SK-N-SH (cell line): ENCODE measurements at regions of chr2 and their contacts with region 1.

Region 1: GRCh38 chr2:237413777-237414661 is at the start of gene COL6A3:
- DNase-seq: no peak
- H3K4me3 ChIP-seq: peak within 1 kb of the TSS in 1 of 2 experiments; percentile 39; a peak in 1 of 4 replicates
- H3K27ac ChIP-seq: peak within 1 kb of the TSS in 1 of 2 experiments; percentile 6; a peak in 2 of 4 replicates
- H3K4me1 ChIP-seq: peaks cover 0 to 5% of the 10 kb centered on the region in 2 experiments; a peak in 1 of 4 replicates
- H3K27me3 ChIP-seq: no peaks in the 10 kb centered on the region
- CTCF ChIP-seq: no peak
- EP300 ChIP-seq: no peak
- RAD21 ChIP-seq: no peak
- polyA plus RNA-seq, gene COL6A3: 10.7 and 18.5 TPM in 2 replicates

Region 2: GRCh38 chr2:237122214-237122666 is 291.8 kb before region 1 on chr2:
- CTCF ChIA-PET with region 1: interaction called, 19 read pairs
- POLR2A ChIA-PET with region 1: no interaction called
- DNase-seq: peak; percentile 68
- H3K4me3 ChIP-seq: no peak overlapping the region
- H3K27ac ChIP-seq: no peak overlapping the region
- H3K4me1 ChIP-seq: peaks cover 3 to 5% of the 10 kb centered on the region in 2 experiments; a peak in 3 of 4 replicates
- H3K27me3 ChIP-seq: no peaks in the 10 kb centered on the region
- CTCF ChIP-seq: peak; percentile 60
- EP300 ChIP-seq: no peak
- RAD21 ChIP-seq: peak; percentile 81

Region 3: GRCh38 chr2:237154082-237154638 is 259.9 kb before region 1 on chr2:
- CTCF ChIA-PET with region 1: interaction called, 36 read pairs
- POLR2A ChIA-PET with region 1: interaction called, 3 read pairs
- DNase-seq: peak; percentile 70
- H3K4me3 ChIP-seq: no peak overlapping the region
- H3K27ac ChIP-seq: no peak overlapping the region
- H3K4me1 ChIP-seq: peaks cover 19 to 22% of the 10 kb centered on the region in 2 experiments; a peak in 3 of 4 replicates
- H3K27me3 ChIP-seq: no peaks in the 10 kb centered on the region
- CTCF ChIP-seq: peak; percentile 66
- EP300 ChIP-seq: no peak
- RAD21 ChIP-seq: peak; percentile 97

Region 4: DNA sequence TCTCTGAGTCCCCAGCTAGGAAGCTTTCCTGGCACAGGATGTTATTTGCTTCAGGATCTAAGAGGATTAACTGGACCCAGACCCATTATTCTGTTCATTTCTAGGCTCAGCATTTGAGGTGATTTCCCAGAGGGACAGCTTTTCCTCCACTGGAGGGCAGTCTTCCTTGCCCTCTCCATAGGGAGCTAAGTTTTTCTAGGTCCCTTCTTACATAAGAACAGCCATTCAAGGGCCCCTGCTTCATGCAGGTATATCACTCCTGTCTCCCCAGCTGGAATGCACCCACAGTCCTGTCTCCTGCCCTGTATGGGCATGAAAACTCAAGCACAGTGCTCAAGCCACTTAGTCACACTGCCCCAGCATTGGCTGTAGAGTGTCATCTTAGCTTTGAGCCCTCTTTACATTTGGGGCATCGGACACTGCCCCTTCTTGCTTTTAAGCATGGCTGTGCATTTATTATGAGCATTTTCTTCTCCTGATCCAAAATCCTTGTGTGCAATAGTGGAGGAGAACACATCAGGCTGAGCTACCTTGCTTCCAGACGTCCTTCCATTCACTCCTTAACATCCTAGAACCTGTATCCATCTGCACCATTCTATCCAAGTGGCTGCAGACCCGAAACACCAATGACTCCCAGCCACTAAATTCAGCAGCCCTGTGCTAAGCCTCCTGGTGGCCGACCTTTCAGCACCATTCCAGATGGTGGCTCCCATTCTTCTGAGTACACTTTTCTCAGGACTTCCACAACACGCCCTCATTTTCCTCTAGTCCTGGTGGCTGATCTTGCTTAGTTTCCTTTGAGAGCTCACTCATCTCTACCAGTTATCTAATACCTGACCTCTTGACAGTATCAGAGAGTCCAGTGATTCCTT is 248.4 kb before region 1 on chr2:
- CTCF ChIA-PET with region 1: interaction called, 10 read pairs
- POLR2A ChIA-PET with region 1: no interaction called
- DNase-seq: peak; percentile 27
- H3K4me3 ChIP-seq: no peak overlapping the region
- H3K27ac ChIP-seq: no peak overlapping the region
- H3K4me1 ChIP-seq: peaks cover 0 to 3% of the 10 kb centered on the region in 2 experiments; a peak in 1 of 4 replicates
- H3K27me3 ChIP-seq: no peaks in the 10 kb centered on the region
- CTCF ChIP-seq: peak; percentile 49
- EP300 ChIP-seq: no peak
- RAD21 ChIP-seq: peak; percentile 61

Region 5: GRCh38 chr2:237315170-237315828 is 98.7 kb before region 1 on chr2:
- CTCF ChIA-PET with region 1: interaction called, 15 read pairs
- POLR2A ChIA-PET with region 1: no interaction called
- DNase-seq: peak; percentile 81
- H3K4me3 ChIP-seq: no peak overlapping the region
- H3K27ac ChIP-seq: peak overlapping the region; percentile 90 to 96
- H3K4me1 ChIP-seq: peaks cover 15 to 23% of the 10 kb centered on the region in 2 experiments
- H3K27me3 ChIP-seq: no peaks in the 10 kb centered on the region
- CTCF ChIP-seq: no peak
- EP300 ChIP-seq: peak; percentile 41 to 85; a peak in 3 of 4 replicates
- RAD21 ChIP-seq: peak; percentile 36; the same call in 1 of the 2 replicates

Region 6: GRCh38 chr2:237451643-237452469 is 37.8 kb after region 1 on chr2:
- CTCF ChIA-PET with region 1: interaction called, 59 read pairs
- POLR2A ChIA-PET with region 1: no interaction called
- DNase-seq: peak; percentile 87
- H3K4me3 ChIP-seq: no peak overlapping the region
- H3K27ac ChIP-seq: peak overlapping the region in 1 of 2 experiments; percentile 83; a peak in 2 of 4 replicates
- H3K4me1 ChIP-seq: peaks cover 0 to 24% of the 10 kb centered on the region in 2 experiments; a peak in 1 of 4 replicates
- H3K27me3 ChIP-seq: no peaks in the 10 kb centered on the region
- CTCF ChIP-seq: peak; percentile 28
- EP300 ChIP-seq: peak in 1 of 2 experiments; percentile 68; a peak in 2 of 4 replicates
- RAD21 ChIP-seq: peak; percentile 47

Region 7: GRCh38 chr2:237474931-237475703 is 61.1 kb after region 1 on chr2:
- CTCF ChIA-PET with region 1: interaction called, 49 read pairs
- POLR2A ChIA-PET with region 1: no interaction called
- DNase-seq: peak; percentile 99
- H3K4me3 ChIP-seq: peak overlapping the region; percentile 67 to 68
- H3K27ac ChIP-seq: peak overlapping the region; percentile 91 to 97
- H3K4me1 ChIP-seq: peaks cover 8 to 18% of the 10 kb centered on the region in 2 experiments; a peak in 3 of 4 replicates
- H3K27me3 ChIP-seq: no peaks in the 10 kb centered on the region
- CTCF ChIP-seq: peak; percentile 85
- EP300 ChIP-seq: peak in 1 of 2 experiments; percentile 41; a peak in 1 of 4 replicates
- RAD21 ChIP-seq: peak; percentile 68

Region 8: GRCh38 chr2:237505188-237505939 is 91.3 kb after region 1 on chr2:
- CTCF ChIA-PET with region 1: no interaction called
- POLR2A ChIA-PET with region 1: no interaction called
- DNase-seq: no peak
- H3K4me3 ChIP-seq: no peak overlapping the region
- H3K27ac ChIP-seq: peak overlapping the region in 1 of 2 experiments; percentile 100; a peak in 2 of 4 replicates
- H3K4me1 ChIP-seq: peaks cover 7 to 30% of the 10 kb centered on the region in 2 experiments; a peak in 3 of 4 replicates
- H3K27me3 ChIP-seq: no peaks in the 10 kb centered on the region
- CTCF ChIP-seq: no peak
- EP300 ChIP-seq: no peak
- RAD21 ChIP-seq: no peak

Region 9: GRCh38 chr2:237723602-237724001 is 309.6 kb after region 1 on chr2:
- CTCF ChIA-PET with region 1: no interaction called
- POLR2A ChIA-PET with region 1: no interaction called
- DNase-seq: peak; percentile 62
- H3K4me3 ChIP-seq: no peak overlapping the region
- H3K27ac ChIP-seq: peak overlapping the region in 1 of 2 experiments; percentile 34; a peak in 2 of 4 replicates
- H3K4me1 ChIP-seq: peaks cover 45 to 53% of the 10 kb centered on the region in 2 experiments
- H3K27me3 ChIP-seq: no peaks in the 10 kb centered on the region
- CTCF ChIP-seq: no peak
- EP300 ChIP-seq: peak in 1 of 2 experiments; percentile 27; a peak in 1 of 4 replicates
- RAD21 ChIP-seq: 0 out of 2 replicates have a peak, but pooled peaks have one; percentile 13